WTC11 (cell line): ENCODE measurements at regions of chr12 and their contacts with region 1.

Region 1: DNA sequence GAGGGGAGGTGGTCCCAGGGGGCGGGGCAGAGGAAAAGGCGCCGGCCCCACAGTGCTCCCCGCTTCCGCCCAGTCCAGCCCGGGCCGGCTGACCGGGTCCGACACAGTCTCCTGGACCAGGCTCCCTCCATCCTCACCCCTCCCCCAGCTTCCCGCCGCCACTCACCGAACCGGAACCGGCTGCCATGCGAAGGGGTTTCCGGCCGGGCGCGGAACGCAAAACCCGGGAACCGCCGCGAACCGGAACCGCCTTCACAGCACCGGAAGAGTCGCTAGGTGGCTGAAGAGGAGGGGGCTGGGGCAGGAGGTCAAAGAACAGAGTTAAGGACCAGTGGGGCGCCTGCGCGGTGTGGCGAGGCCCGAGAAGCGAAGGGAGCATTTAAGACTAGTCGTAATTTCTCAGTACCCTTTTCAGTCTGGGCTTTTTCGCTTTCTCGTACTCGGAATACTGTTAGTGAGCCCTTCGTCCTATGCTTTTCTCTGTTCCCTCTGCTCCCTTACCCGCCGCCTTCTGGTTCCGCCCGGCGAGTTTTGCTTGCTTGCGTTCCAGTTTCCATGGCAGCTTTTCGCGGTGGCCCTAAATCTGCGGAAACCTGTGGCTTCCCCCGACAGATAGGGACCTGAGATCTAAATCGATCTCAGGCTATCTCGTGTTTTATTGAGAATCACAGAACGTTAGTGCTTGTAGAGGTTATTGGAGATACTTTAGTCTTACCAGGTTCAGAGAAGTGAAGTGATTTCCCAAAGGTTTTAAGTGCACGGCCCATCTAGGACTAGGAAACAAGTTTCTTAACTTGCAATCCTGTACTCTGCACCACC is at the start of gene SENP1:
- DNase-seq: peak; percentile 93
- ATAC-seq: peak; percentile 89
- H3K4me3 Mint-ChIP-seq: peak within 1 kb of the TSS; percentile 93
- H3K27ac Mint-ChIP-seq: peak within 1 kb of the TSS; percentile 98
- H3K4me1 Mint-ChIP-seq: peaks cover 16% of the 10 kb centered on the region
- H3K27me3 Mint-ChIP-seq: peaks cover 25% of the 10 kb centered on the region
- CTCF ChIP-seq: no peak
- total RNA-seq, gene SENP1: 20.4 to 23.3 TPM (median 21.3 TPM) in 3 replicates

Region 2: DNA sequence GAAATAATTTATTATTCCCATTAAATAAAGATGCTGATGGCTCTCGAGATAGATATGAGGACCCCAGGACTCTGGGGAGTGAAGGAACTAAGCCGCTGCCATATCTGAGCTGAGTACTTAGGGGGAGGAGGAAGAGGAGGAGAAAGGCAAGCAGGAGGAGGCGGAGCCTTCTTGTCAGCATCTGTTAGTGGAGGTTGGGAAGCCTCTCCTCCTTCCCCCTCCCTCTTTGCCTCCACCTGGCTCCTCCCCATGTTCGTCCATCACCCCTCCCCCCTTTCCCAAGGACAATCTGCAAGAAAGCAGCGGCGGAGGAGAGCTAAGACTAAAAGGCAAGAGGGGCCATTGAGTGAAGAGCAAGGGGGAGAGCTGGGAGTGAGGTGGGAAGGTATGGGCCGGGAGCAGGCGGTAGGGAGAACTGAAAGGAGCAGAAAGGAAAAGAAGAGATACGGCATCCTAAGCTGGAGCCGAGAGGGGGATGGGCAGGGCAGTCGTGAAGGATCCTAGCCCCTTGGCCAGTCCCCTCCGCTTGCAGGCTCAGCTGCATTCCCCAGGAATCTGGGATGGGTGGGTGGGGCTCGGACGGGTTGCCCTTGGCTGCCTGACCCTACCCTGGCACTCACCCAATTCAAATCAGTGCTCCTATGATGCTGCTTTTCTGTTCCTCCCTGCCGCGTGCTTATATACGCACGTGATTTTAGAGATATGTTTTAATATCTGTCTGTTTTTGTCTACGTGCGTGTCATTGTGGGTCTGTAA is 13.2 kb after region 1 on chr12 and contains the start of gene PFKM:
- CTCF ChIA-PET with region 1: interaction called, 7 read pairs
- POLR2A ChIA-PET with region 1: interaction called, 16 read pairs
- DNase-seq: peak; percentile 88
- ATAC-seq: peak; percentile 99
- H3K4me3 Mint-ChIP-seq: peak within 1 kb of the TSS; percentile 92
- H3K27ac Mint-ChIP-seq: peak within 1 kb of the TSS; percentile 82
- H3K4me1 Mint-ChIP-seq: peaks cover 16% of the 10 kb centered on the region
- H3K27me3 Mint-ChIP-seq: peaks cover 13% of the 10 kb centered on the region
- CTCF ChIP-seq: no peak
- total RNA-seq, gene PFKM: 99.3 to 109 TPM (median 108 TPM) in 3 replicates